WTC11 (cell line): ENCODE measurements at regions of chr18 and their contacts with region 1.

Region 1: GRCh38 chr18:47748847-47749599 is 181.4 kb downstream of the SMAD2 start:
- DNase-seq: peak; percentile 83
- ATAC-seq: peak; percentile 81
- H3K4me3 Mint-ChIP-seq: peak overlapping the region; percentile 65
- H3K27ac Mint-ChIP-seq: no peak overlapping the region
- H3K4me1 Mint-ChIP-seq: peaks cover 9% of the 10 kb centered on the region; the same call in 1 of the 2 replicates
- H3K27me3 Mint-ChIP-seq: peaks cover 17% of the 10 kb centered on the region
- CTCF ChIP-seq: peak; percentile 100

Region 2: GRCh38 chr18:47595815-47596496 is 153.1 kb before region 1 on chr18:
- CTCF ChIA-PET with region 1: interaction called, 23 read pairs
- POLR2A ChIA-PET with region 1: no interaction called
- DNase-seq: peak; percentile 81
- ATAC-seq: peak; percentile 74
- H3K4me3 Mint-ChIP-seq: no peak overlapping the region
- H3K27ac Mint-ChIP-seq: no peak overlapping the region
- H3K4me1 Mint-ChIP-seq: peaks cover 38% of the 10 kb centered on the region
- H3K27me3 Mint-ChIP-seq: peaks cover 8% of the 10 kb centered on the region
- CTCF ChIP-seq: peak; percentile 77

Region 3: GRCh38 chr18:47826157-47827074 is 77.4 kb after region 1 on chr18:
- CTCF ChIA-PET with region 1: no interaction called
- POLR2A ChIA-PET with region 1: no interaction called
- DNase-seq: no peak
- ATAC-seq: no peak
- H3K4me3 Mint-ChIP-seq: no peak overlapping the region
- H3K27ac Mint-ChIP-seq: no peak overlapping the region
- H3K4me1 Mint-ChIP-seq: peaks cover 2% of the 10 kb centered on the region
- H3K27me3 Mint-ChIP-seq: no peaks in the 10 kb centered on the region
- CTCF ChIP-seq: no peak